ENCODE measurements at regions of chr12 and their contacts with region 1.

Region 1: DNA sequence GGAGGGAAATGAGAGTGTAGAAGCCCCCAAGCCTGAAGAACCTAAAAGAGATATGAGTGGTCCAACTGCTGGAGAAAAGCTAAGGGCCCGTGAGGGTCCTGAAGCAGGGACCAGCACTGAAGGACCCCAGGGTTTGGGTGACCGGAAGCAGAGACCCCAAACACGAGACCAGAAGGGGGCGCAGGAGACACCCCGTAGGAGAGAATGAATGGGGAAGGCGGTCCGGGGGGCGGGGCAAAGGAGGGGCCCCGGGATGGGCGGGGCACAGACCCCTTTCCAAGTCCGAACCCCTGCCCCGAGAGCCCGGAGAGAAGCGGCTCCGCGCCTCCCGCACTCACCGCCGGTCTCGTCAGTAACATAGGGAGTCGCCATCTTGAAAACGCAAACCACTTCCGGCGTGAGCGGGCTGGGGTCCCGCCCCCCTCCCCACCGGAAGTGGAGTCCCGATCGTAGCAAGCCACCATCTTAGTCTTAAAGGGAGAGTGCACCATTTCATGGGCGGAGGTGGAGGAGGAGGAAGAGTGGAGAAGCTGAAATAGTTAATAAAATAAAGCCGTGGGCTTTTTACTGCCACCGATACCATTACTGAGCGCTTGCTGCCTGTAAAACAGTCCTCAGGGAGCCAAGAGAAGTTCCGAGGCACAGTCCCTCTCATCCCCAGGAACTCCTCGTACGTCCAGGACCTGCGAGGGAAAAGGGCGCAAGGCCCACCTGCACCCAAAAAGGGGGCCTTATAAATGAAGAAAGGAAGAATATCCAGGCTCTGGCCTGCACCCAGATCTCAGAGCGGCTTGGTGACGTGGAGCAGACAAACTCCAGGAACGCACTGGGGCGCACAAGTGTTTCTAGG is 731 bp downstream of the PYM1 start:
- DNase-seq: peak; percentile 94
- H3K4me3 Mint-ChIP-seq: peak overlapping the region; percentile 95
- H3K27ac Mint-ChIP-seq: peak overlapping the region; percentile 95
- H3K4me1 Mint-ChIP-seq: peaks cover 34% of the 10 kb centered on the region
- H3K27me3 Mint-ChIP-seq: no peaks in the 10 kb centered on the region
- CTCF ChIP-seq: peak; percentile 93

Region 2: DNA sequence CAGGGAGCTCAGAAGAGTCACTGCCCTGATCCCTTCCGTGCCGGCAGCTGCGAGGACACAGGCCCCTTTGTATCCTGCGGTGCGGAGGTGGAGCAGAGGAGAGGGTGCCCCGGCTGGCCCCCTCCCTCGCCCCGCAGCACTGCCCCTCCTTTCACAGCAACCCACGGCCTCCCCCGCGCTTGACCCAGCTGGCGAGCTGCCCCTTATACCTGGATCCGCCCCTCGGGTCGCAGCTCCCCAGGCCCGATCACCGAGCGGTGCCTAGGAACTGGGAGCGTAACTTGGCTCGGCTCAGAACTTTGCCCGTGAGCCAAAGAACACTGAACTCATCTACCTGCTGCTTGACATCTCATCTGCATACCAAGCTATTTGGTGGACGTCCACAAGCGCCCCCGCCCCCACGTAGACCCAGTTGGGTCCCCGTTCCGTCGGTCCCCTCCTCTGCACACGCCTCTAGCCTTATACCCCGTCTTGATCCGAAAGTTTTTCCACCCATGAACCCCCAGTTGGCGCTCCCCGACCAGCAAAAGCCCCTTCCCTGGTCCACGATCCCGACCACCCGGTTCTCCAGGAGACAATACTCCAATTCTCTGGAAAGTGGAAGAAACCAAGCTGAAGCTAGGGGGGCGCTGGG is 96.9 kb before region 1 on chr12:
- CTCF ChIA-PET with region 1: interaction called, 6 read pairs
- intact Hi-C with region 1: loop called (anchors 2 kb)
- DNase-seq: no peak
- H3K4me3 Mint-ChIP-seq: peak overlapping the region; percentile 91
- H3K27ac Mint-ChIP-seq: peak overlapping the region; percentile 84
- H3K4me1 Mint-ChIP-seq: peaks cover 27% of the 10 kb centered on the region
- H3K27me3 Mint-ChIP-seq: no peaks in the 10 kb centered on the region
- CTCF ChIP-seq: no peak

Region 3: DNA sequence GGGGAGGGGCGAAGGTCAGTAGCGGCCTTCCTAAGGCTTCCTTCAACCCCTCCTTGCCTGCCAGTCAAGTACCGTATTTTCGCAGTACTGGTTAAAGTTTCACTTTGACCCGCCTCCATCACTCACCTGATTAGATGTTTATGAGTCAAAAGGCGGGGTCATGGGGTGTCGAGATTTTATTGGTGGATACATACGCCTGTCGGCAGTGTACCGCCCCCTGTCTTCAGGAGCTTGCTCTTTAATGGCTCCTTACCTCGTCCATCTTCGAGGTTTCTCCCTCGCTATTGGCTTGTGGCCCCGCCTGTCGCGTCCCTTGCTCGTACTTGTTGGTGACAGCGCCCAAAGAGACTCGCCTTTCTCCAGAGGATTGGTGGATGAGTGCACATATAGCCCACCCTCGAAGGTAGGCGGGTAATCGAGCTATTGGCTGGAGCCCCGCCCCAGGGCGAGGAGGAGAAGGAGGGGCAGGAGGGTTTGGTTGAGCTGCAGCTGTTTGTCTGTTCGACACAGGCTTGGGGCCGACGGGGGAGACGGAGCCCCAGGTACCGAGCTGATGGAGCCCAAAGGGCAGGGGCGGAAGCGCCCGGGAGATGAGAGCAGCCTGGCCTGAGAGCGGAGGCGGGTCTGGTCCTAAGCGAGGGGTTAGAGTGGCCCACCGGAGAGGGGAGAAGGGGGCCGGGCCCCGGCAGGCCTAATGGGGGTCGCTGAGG is 46.8 kb after region 1 on chr12 and contains the start of gene RAB5B:
- CTCF ChIA-PET with region 1: interaction called, 6 read pairs
- intact Hi-C with region 1: loop called (anchors 2 kb)
- DNase-seq: peak; percentile 99
- H3K4me3 Mint-ChIP-seq: no peak within 1 kb of the TSS
- H3K27ac Mint-ChIP-seq: no peak within 1 kb of the TSS
- H3K4me1 Mint-ChIP-seq: peaks cover 15% of the 10 kb centered on the region
- H3K27me3 Mint-ChIP-seq: no peaks in the 10 kb centered on the region
- CTCF ChIP-seq: peak; percentile 14
- total RNA-seq, gene RAB5B: 84.7 and 91.6 TPM in 2 replicates

Region 4: GRCh38 chr12:55996715-55997534 is 70.0 kb after region 1 on chr12 and contains the start of gene SUOX:
- CTCF ChIA-PET with region 1: no interaction called
- intact Hi-C with region 1: loop called (anchors 2 kb)
- DNase-seq: peak; percentile 97
- H3K4me3 Mint-ChIP-seq: peak within 1 kb of the TSS; percentile 90
- H3K27ac Mint-ChIP-seq: peak within 1 kb of the TSS; percentile 91
- H3K4me1 Mint-ChIP-seq: peaks cover 36% of the 10 kb centered on the region
- H3K27me3 Mint-ChIP-seq: no peaks in the 10 kb centered on the region
- CTCF ChIP-seq: no peak
- total RNA-seq, gene SUOX: 31.1 and 34.9 TPM in 2 replicates

Region 5: DNA sequence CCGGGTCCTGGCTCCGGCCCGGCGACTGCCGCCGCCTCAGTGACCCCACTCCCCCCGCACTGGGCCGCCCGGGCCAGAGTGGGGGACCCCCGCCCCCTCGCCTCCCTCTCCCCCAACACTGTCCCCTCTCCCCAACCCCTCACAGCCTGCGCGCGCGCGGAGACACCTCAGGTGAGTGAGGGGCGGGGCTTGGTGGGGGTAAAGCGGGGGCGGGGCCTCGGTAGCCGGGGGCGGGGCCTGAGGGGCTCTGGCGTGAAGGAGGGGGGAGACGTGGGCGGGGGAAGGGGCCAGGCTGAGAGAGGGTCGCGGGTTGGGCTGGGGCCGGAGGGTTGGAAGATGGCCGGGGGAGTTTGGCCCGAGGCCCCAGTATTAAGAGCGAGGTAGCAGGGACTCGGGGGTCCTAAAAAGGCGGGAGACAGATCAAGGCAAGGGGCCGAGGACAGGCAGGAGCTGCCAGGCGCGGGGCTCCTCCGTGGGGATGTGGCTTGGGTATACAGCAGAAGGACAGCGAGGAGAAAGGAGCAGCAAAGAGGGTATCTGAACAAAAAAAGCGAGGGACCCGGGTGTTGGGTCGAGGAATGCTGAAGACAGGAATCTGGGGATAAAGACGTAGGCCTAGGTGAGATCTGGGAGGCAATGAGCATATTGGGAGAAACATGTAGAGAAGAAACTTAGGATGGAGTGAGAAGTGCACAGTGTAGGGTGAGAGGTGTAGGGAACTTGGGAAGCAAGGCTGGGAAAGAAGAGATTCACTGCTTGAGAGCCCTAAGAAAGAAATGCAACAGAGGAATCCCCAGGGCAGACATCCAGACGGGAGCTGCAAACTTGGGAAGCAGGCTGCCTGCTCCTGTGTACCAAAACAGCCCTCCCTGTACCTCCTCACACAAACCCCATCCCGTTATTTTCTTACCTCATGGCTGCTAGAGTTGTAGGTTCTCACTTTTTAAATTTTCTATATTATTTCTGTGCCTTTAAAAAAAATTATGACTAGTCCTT is 80.9 kb after region 1 on chr12:
- CTCF ChIA-PET with region 1: interaction called, 11 read pairs
- intact Hi-C with region 1: no loop called
- DNase-seq: peak; percentile 76
- H3K4me3 Mint-ChIP-seq: peak overlapping the region; percentile 78
- H3K27ac Mint-ChIP-seq: peak overlapping the region; percentile 30
- H3K4me1 Mint-ChIP-seq: peaks cover 16% of the 10 kb centered on the region
- H3K27me3 Mint-ChIP-seq: no peaks in the 10 kb centered on the region
- CTCF ChIP-seq: no peak

Region 6: GRCh38 chr12:56029666-56030293 is 102.8 kb after region 1 on chr12:
- CTCF ChIA-PET with region 1: no interaction called
- intact Hi-C with region 1: loop called (anchors 5 kb)
- DNase-seq: peak; percentile 78
- H3K4me3 Mint-ChIP-seq: no peak overlapping the region
- H3K27ac Mint-ChIP-seq: no peak overlapping the region
- H3K4me1 Mint-ChIP-seq: peaks cover 16% of the 10 kb centered on the region
- H3K27me3 Mint-ChIP-seq: no peaks in the 10 kb centered on the region
- CTCF ChIP-seq: peak; percentile 74

Region 7: DNA sequence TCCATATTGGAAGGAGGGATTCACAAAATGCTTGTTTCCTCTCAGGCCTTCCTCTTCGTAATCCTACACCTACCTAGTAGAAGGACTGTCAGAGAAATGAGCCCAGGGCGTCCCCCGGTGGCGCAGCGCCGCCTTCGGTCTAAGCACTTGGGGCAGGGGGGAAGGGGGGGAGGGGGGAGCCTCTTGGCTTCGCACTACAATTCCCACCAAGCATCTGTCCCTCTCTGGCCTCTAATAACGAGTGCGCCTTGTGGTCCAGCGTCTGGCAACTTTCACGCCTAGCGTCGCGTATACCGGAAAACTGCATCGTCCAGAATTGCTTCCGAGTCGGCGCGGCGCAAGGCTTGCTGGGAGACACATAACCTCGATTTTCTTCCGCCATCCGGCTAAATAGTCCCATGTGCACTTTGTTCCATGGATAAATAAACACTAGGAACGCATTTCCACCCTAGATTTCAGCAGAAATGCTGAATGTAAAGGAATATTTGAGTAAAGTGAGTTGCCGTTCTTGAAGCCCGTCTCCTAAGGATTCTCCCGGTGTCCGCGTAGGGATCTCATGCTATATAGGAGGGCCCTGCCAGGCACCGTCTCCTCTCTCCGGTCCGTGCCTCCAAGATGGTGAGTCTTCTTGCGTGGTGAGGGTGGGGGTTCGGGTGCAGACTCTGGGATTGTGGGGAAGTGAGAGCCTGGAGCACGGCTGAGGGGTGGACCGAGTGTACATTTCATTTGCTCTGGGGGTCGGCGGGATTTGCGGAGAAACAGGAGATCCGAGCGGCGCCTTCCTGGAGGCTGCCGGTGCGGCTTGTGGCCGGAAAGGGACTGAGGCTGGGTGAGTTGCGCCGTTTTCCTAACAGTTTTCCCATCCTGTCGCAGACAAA is 114.8 kb after region 1 on chr12 and contains the start of gene RPS26:
- CTCF ChIA-PET with region 1: interaction called, 3 read pairs
- intact Hi-C with region 1: loop called (anchors 1 kb)
- DNase-seq: peak; percentile 93
- H3K4me3 Mint-ChIP-seq: peak within 1 kb of the TSS; percentile 90
- H3K27ac Mint-ChIP-seq: peak within 1 kb of the TSS; percentile 95
- H3K4me1 Mint-ChIP-seq: peaks cover 18% of the 10 kb centered on the region
- H3K27me3 Mint-ChIP-seq: no peaks in the 10 kb centered on the region
- CTCF ChIP-seq: peak; percentile 51
- total RNA-seq, gene RPS26: 50.6 and 50.7 TPM in 2 replicates

Region 8: DNA sequence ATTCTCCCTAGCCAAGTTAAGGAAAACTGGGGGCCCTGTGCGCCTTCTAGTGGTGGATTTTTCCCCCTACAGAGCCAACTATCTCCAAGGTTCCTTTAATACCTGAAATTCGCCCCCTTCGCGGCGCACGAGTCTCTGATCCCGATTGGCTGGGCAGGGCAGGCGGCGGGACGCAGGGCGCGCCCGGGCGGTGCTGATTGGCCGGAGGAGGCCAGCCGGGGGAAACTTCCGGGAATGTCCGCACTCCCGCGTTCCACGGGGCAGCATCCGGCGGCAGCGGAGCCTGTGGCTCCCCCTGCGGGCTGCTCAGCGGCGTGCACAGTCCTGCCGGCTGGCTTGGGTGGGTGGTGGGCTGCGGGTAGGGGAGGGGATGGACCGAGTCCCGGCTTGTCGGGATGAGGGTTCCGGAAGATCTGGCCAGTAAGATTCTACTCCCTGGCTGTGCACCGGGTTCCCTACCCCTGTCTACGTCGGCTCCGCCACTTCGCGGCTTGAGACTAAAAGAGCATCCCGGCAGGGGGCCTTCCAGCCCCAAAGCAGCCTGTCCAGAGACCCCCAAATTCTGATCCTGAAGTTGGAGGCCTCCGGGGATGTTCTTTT is 297.2 kb after region 1 on chr12 and contains the start of gene NABP2:
- CTCF ChIA-PET with region 1: no interaction called
- intact Hi-C with region 1: no loop called
- DNase-seq: peak; percentile 99
- H3K4me3 Mint-ChIP-seq: peak within 1 kb of the TSS; percentile 78
- H3K27ac Mint-ChIP-seq: peak within 1 kb of the TSS; percentile 73
- H3K4me1 Mint-ChIP-seq: peaks cover 17% of the 10 kb centered on the region
- H3K27me3 Mint-ChIP-seq: no peaks in the 10 kb centered on the region
- CTCF ChIP-seq: peak; percentile 95
- total RNA-seq, gene NABP2: 55.5 and 63.3 TPM in 2 replicates

Measured in Calu3 (cell line).